GM10248 (cell line): ENCODE measurements at regions of chr2 and their contacts with region 1.

Region 1: DNA sequence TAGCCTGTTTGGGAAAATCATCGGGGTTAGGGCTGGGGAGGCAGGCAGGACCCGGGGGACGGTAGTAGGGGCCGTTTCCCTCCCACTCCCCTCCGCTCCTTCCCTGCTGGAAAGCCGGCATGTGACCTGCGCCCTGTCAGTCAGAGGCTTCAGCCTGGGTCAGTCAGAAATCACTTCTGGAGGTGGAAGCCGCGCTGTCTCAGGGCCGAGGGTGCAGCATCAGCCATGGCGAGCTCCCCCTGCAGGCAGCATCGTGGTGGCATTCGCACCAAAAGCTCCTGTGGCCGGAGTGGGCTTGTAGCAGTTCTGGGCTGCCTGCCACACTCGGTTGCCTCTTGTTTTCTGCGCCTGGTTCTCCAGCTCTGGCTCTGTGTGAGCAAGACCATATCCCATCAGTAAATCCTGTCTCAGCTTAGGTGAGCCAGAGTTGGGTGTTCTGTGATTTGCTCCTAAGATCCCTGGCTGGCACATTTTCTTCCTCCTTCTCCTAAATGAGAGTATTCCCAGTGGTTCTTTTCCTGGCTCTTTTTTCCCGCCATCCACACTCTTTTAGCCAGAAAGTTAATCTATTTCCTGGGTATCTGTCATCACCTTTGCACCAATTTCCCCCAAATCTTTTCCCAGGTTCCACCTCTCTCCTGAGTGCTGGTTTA is 123.9 kb upstream of the CD302 start:
- DNase-seq: peak; percentile 84
- CTCF ChIP-seq: peak; percentile 94

Region 2: DNA sequence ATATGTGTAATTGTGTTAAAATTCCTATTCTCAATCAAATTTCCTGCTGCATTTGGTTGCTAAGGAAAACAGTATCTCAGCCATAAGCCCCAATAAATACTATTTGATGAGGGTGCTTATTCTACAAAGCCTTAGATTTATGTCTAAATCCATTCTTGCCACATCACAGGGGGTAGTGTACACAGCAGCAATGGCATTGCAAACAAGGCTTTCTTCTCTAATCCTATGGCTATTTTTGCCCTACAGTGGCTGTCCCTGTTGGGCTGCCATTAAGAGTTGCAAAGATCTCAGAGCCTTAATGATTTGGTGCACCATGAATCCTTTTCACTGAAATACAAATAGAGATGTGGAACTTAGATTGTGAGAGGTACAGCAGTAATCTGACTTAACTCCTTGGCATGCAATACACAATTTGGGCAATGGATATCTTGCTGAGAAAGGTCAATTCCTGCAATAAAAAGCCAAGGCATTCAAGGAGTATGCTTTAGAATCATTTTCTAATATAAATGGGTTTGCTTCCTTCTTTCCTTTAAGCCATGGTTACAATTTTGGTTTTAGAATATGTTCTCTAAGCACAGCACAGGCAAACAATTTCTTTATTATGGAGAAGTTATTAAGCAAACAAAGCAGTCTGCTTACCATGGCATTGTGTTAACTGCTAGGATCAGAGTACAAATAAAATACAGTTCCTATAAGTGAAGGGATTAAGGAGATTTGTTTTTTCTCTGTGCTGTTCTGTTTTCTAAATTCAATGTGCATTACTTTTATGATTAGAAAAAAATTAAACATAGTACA is 54.1 kb before region 1 on chr2:
- CTCF ChIA-PET with region 1: interaction called, 10 read pairs
- POLR2A ChIA-PET with region 1: no interaction called
- DNase-seq: no peak
- CTCF ChIP-seq: no peak

Region 3: DNA sequence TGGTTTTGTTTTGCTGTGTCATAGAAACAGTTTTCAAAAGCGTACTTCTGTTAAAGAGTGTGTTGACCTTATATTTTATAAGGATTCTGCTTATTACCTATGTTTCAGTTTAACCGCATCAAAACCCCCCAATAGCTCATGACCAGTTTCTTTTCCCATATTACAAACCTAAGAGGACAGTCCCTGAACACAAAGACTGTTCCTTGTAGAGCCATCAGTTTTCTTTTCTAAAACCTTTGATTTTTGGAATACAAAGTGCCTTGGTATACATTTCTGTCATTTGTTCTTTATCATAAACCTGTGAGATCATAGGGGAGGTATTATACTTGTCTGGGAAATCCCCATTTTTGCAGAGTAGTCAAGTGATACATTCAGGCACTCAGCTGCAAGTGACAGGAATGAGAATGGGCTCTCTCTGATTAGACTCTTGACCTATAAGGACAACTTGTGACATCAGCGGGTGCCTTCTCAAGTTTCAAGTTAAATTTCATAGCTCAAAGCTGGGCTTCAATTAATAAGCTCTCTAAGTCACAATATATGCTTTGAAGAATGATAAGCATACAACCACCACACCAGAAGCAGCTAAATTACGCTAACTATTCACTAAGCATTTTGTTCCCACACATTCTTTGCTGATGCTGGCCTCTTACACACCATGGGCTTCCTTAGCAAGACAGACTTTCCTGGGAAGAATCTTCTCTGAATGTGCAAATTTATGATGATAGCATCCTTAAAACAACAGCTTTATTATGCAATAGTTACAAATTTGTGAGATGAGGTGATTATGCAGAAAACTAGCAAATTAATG is 26.4 kb before region 1 on chr2:
- CTCF ChIA-PET with region 1: interaction called, 279 read pairs
- POLR2A ChIA-PET with region 1: interaction called, 3 read pairs
- DNase-seq: peak; percentile 38
- CTCF ChIP-seq: no peak

Region 4: DNA sequence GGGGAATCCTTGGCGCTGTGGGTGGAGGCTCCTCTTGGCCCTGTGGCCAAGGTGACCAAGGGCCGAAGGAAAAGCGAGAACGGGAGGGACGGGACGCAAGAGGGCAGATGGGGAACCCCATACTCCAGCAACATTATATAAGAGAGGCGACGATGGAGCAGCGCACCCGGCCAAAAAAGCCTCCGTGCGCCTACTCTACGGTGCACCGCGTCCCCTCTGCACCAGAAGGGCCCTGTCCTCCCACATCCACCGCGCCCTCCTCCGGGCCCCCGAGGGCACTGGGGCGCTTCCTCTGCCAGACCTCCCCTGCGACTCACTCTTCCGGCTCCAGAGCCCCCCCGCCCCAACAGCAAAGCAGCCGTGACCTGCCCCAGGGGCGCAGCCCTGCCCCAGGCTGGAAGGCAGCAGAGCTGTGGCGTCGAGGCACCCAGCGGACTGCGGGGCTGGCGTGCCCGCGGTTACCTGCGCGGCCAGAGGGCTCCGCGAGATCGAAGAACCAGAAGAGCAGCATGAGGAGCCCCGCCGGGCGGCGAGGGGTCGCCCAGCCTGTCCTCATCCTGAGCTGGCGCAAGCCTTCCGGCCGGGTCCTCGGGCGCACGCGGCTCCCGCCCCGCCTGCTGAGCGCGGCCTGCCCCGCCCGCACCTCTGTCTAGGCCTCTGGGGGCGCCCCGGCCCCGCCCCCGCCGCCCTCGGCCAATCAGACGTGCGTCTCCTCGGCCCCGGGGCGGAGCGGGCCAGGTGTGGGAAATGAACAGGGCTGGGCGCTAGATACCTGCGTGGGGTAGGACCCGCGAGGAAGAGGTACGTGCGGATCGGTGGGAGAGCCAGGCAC is 17.5 kb before region 1 on chr2:
- CTCF ChIA-PET with region 1: interaction called, 279 read pairs
- POLR2A ChIA-PET with region 1: interaction called, 3 read pairs
- DNase-seq: peak; percentile 92
- CTCF ChIP-seq: no peak

Region 5: DNA sequence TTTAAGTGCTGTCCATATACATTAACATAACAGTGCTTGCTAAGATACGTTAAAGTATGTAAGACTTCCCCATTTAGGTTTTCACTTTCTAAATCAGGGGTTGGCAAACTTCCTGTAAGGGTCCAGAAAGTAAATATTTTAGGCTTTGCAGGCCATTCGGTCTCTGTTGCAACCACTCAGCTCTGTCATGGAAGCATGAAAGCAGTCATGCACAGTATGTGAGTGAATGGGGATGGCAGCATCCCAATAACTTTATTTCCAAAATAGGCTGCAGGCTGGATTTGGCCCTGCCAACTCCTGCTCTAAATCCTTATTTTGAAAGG is 11.8 kb after region 1 on chr2:
- CTCF ChIA-PET with region 1: interaction called, 50 read pairs
- POLR2A ChIA-PET with region 1: no interaction called
- DNase-seq: peak; percentile 22
- CTCF ChIP-seq: no peak

Region 6: DNA sequence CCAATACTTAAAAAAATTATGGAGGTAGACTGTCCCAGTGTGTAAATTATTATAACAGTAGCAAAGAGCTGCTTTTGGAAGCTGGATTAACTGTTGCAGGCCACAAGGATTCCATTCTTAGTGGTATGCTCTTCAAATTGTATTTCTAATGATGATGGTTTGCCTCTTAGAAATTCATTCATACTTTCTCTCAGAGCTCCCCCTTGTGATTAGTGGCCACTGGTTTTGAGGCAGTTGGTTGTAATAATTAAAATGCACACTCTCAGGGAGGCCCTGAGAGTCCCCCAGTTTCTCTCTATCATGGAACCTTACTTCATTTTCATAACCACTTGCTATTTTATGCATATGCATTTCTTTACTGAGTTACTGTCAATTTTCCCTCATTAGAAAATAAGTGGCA is 18.1 kb after region 1 on chr2:
- CTCF ChIA-PET with region 1: interaction called, 50 read pairs
- POLR2A ChIA-PET with region 1: no interaction called
- DNase-seq: peak; percentile 65
- CTCF ChIP-seq: peak; percentile 61

Region 7: GRCh38 chr2:160039166-160039903 is 117.5 kb after region 1 on chr2:
- CTCF ChIA-PET with region 1: no interaction called
- POLR2A ChIA-PET with region 1: no interaction called
- DNase-seq: no peak
- CTCF ChIP-seq: no peak